Natural killer cell (primary cell): ENCODE measurements at regions of chr6 and their contacts with region 1.

Region 1: GRCh38 chr6:41367700-41368099 is 32.3 kb downstream of the NCR2 start:
- DNase-seq: peak in 1 of 2 donors; percentile 20
- ATAC-seq: no peak
- H3K4me3 ChIP-seq: no peak overlapping the region
- H3K4me3 Mint-ChIP-seq: no peak overlapping the region
- H3K27ac ChIP-seq: no peak overlapping the region
- H3K27ac Mint-ChIP-seq: no peak overlapping the region
- H3K4me1 ChIP-seq: peaks cover 24% of the 10 kb centered on the region
- H3K4me1 Mint-ChIP-seq: peaks cover 23% of the 10 kb centered on the region in 2 donors
- H3K27me3 ChIP-seq: peaks cover 28% of the 10 kb centered on the region
- H3K27me3 Mint-ChIP-seq: peaks cover 33 to 56% of the 10 kb centered on the region in 2 donors
- CTCF ChIP-seq: no peak

Region 2: GRCh38 chr6:41306187-41306854 is 61.4 kb before region 1 on chr6:
- intact Hi-C with region 1: loop called (anchors 2 kb)
- DNase-seq: peak in 1 of 2 donors; percentile 82
- ATAC-seq: peak in 2 of 3 donors; percentile 42 to 45
- H3K4me3 ChIP-seq: no peak overlapping the region
- H3K4me3 Mint-ChIP-seq: no peak overlapping the region
- H3K27ac ChIP-seq: no peak overlapping the region
- H3K27ac Mint-ChIP-seq: no peak overlapping the region
- H3K4me1 ChIP-seq: no peaks in the 10 kb centered on the region
- H3K4me1 Mint-ChIP-seq: no peaks in the 10 kb centered on the region
- H3K27me3 ChIP-seq: no peaks in the 10 kb centered on the region
- H3K27me3 Mint-ChIP-seq: peaks cover 4 to 18% of the 10 kb centered on the region in 2 donors
- CTCF ChIP-seq: peak; percentile 86

Region 3: DNA sequence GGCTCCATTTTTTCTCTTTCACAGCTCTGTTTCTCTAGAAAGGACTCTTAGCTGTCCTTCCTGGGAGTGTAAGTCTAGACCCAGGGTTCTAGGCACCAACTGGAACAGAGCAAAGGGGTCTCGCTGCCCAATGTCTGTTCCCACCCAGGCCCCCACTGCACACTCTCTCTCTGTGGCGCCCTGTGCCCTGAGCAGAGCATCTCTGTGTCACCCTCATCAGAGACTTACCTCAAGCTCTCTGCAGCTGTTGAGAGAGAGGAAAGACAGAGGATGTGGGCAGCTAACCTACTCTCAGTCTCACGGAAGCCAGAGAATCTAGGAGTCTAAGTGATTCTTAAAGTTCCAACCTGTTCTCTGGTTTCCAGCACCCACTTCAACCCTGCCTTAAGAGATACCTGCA is 22.8 kb before region 1 on chr6:
- intact Hi-C with region 1: no loop called
- DNase-seq: peak in 1 of 2 donors; percentile 79
- ATAC-seq: peak; percentile 88 to 99 (median 97)
- H3K4me3 ChIP-seq: no peak overlapping the region
- H3K4me3 Mint-ChIP-seq: peak overlapping the region; percentile 73
- H3K27ac ChIP-seq: peak overlapping the region; percentile 30
- H3K27ac Mint-ChIP-seq: peak overlapping the region; percentile 85 to 92
- H3K4me1 ChIP-seq: peaks cover 27% of the 10 kb centered on the region
- H3K4me1 Mint-ChIP-seq: peaks cover 21 to 38% of the 10 kb centered on the region in 2 donors
- H3K27me3 ChIP-seq: peaks cover 2% of the 10 kb centered on the region
- H3K27me3 Mint-ChIP-seq: peaks cover 0 to 6% of the 10 kb centered on the region in 2 donors
- CTCF ChIP-seq: no peak

Region 4: DNA sequence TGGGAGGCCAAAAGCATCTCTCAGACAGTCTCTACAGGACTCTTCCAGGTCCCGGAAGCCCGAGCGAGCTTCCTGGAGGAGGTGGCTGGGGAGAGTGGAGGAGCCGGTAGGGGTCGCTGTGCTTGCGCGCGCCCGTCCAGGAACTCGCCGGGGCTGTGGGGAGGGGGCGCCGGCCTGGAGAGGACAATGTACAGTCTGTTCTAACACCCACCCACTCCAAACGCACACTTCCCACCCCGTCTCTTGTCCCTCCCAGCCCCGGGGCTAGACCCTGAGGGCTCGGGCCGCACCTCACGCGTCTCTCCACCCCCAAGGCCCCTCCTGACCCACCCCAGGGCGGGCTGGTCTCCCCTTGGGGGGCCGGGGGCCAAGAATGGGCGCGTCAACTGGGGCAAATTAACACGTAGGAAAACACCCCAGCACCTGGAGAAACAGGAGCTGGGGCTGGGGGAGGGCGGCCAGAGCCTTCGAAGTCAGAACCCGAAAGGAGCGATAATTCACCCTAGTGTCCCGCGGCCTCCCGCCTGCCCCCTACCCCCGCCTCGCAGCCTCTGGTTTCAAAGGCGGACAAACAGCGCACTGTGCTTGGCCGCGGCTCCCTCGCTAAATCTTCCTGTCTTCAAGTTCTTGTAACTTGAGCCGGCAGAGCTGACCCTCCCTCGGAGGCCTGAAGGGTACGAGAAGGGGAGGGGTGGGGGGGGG is 75.3 kb after region 1 on chr6:
- intact Hi-C with region 1: no loop called
- DNase-seq: peak in 1 of 2 donors; percentile 55
- ATAC-seq: peak in 1 of 3 donors; percentile 23
- H3K4me3 ChIP-seq: no peak overlapping the region
- H3K4me3 Mint-ChIP-seq: peak overlapping the region; percentile 13
- H3K27ac ChIP-seq: peak overlapping the region; percentile 51
- H3K27ac Mint-ChIP-seq: no peak overlapping the region
- H3K4me1 ChIP-seq: peaks cover 53% of the 10 kb centered on the region
- H3K4me1 Mint-ChIP-seq: peaks cover 33 to 39% of the 10 kb centered on the region in 2 donors
- H3K27me3 ChIP-seq: peaks cover 34% of the 10 kb centered on the region
- H3K27me3 Mint-ChIP-seq: peaks cover 72 to 78% of the 10 kb centered on the region in 2 donors
- CTCF ChIP-seq: peak; percentile 39